OCI-LY7 (cell line): ENCODE measurements at regions of chr1 and their contacts with region 1.

Region 1: GRCh38 chr1:179365320-179366092 is at the start of gene AXDND1:
- DNase-seq: peak; percentile 91
- H3K4me3 ChIP-seq: peak within 1 kb of the TSS; percentile 92
- H3K27ac ChIP-seq: peak within 1 kb of the TSS; percentile 91
- H3K4me1 ChIP-seq: peaks cover 11% of the 10 kb centered on the region
- CTCF ChIP-seq: peak; percentile 25; the same call in 1 of the 2 replicates
- total RNA-seq, gene AXDND1: 0.16 and 0.23 TPM in 2 replicates

Region 2: DNA sequence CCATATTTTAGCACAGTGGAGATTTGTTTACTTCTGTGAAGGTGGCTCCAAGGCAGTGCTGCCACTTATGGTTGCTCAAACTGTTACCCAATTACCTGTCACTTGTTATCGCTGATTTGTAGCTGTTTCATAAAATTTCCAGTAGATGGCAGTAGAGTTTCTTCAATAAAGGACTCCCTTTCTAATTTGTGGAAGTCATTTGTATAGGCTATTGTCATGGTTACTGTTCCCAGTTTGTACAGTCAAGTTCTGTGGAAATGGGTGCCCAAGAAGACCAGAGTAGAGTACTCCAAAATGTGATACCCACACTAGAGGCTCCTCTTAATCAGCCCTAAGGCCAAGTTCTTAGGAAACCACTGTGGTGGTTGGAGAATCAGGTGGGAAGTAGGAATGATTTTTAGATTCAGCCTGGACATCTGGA is 1054.8 kb before region 1 on chr1:
- CTCF ChIA-PET with region 1: no interaction called
- POLR2A ChIA-PET with region 1: no interaction called
- intact Hi-C with region 1: loop called (anchors 10 kb)
- DNase-seq: peak; percentile 70
- H3K4me3 ChIP-seq: no peak overlapping the region
- H3K27ac ChIP-seq: no peak overlapping the region
- H3K4me1 ChIP-seq: no peaks in the 10 kb centered on the region
- CTCF ChIP-seq: peak; percentile 90

Region 3: GRCh38 chr1:178371235-178371634 is 994.3 kb before region 1 on chr1:
- CTCF ChIA-PET with region 1: no interaction called
- POLR2A ChIA-PET with region 1: no interaction called
- intact Hi-C with region 1: no loop called
- DNase-seq: no peak
- H3K4me3 ChIP-seq: no peak overlapping the region
- H3K27ac ChIP-seq: no peak overlapping the region
- H3K4me1 ChIP-seq: no peaks in the 10 kb centered on the region
- CTCF ChIP-seq: no peak

Region 4: GRCh38 chr1:179121159-179121938 is 244.2 kb before region 1 on chr1:
- CTCF ChIA-PET with region 1: no interaction called
- POLR2A ChIA-PET with region 1: interaction called, 3 read pairs
- intact Hi-C with region 1: loop called (anchors 1 kb)
- DNase-seq: peak; percentile 63
- H3K4me3 ChIP-seq: no peak overlapping the region
- H3K27ac ChIP-seq: no peak overlapping the region
- H3K4me1 ChIP-seq: no peaks in the 10 kb centered on the region
- CTCF ChIP-seq: peak; percentile 88

Region 5: GRCh38 chr1:179293340-179294327 is 71.9 kb before region 1 on chr1 and contains the start of gene SOAT1:
- CTCF ChIA-PET with region 1: no interaction called
- POLR2A ChIA-PET with region 1: interaction called, 8 read pairs
- intact Hi-C with region 1: loop called (anchors 1 kb)
- DNase-seq: peak; percentile 97
- H3K4me3 ChIP-seq: peak within 1 kb of the TSS; percentile 80
- H3K27ac ChIP-seq: peak within 1 kb of the TSS; percentile 63
- H3K4me1 ChIP-seq: peaks cover 42% of the 10 kb centered on the region
- CTCF ChIP-seq: 0 out of 2 replicates have a peak, but pooled peaks have one; percentile 10
- total RNA-seq, gene SOAT1: 8.7 and 11.1 TPM in 2 replicates

Region 6: GRCh38 chr1:179599623-179600249 is 234.2 kb after region 1 on chr1:
- CTCF ChIA-PET with region 1: interaction called, 3 read pairs
- POLR2A ChIA-PET with region 1: no interaction called
- intact Hi-C with region 1: loop called (anchors 1 kb)
- DNase-seq: peak; percentile 85
- H3K4me3 ChIP-seq: no peak overlapping the region
- H3K27ac ChIP-seq: no peak overlapping the region
- H3K4me1 ChIP-seq: peaks cover 44% of the 10 kb centered on the region
- CTCF ChIP-seq: peak; percentile 95

Region 7: DNA sequence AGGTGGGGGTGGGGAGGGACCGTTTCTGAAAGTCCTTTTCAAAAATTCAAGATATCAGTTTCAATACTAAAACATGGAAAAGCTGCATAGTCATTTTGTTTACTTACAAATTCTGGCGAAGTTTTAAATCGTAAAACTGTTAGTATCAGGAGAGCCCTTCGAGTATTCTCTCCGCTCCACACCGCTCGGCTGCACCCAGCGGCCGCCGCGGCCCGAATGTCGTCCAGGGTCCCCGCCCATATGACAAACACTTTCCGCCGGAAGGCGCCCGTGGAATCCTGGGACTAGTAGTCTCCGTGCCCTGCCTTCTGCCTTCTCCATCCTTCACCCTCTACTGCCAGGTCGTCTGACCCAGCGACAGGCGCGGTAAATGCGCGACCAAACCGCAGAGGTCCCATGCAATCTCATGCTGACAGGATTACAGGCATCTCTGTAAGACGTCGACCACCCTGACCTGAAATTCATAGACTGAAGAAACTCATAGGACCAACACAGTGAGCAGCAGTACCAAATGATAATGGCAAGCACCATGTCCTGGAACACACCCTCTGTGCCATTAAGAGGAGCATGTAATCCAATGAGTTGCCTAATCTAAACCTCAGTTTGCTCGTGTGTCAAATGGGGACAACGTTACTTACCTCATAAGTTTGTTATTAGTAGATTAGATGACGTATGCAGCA is 512.2 kb after region 1 on chr1 and contains the start of gene TOR1AIP2:
- CTCF ChIA-PET with region 1: no interaction called
- POLR2A ChIA-PET with region 1: no interaction called
- intact Hi-C with region 1: no loop called
- DNase-seq: peak; percentile 91
- H3K4me3 ChIP-seq: peak within 1 kb of the TSS; percentile 79
- H3K27ac ChIP-seq: peak within 1 kb of the TSS; percentile 38
- H3K4me1 ChIP-seq: peaks cover 45% of the 10 kb centered on the region
- CTCF ChIP-seq: no peak
- total RNA-seq, gene TOR1AIP2: 21.6 and 31.0 TPM in 2 replicates